Panc1 (cell line): ENCODE measurements at regions of chr14 and their contacts with region 1.

Region 1: DNA sequence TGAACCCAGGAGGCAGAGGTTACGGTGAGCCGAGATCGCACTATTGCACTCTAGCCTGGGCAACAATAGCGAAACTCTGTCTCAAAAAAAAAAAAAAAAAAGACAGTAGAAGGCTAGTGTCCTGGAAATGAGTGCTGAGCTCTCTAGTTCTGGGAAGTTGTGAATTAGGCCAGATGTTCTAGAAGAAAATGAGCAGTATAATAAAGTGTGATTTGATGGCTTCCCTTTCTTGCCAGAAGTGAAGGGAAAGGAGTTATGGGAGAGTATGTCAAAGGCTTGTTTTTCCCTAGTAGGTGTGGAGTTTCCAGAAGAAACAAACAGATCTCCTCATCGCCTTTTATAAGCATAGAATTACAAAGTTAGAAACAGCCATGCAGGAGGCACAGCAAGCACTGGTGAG is 20.5 kb downstream of the RNF212B start:
- DNase-seq: no peak
- ATAC-seq: no peak
- H3K4me3 ChIP-seq: no peak overlapping the region
- H3K27ac ChIP-seq: no peak overlapping the region
- H3K4me1 ChIP-seq: no peaks in the 10 kb centered on the region
- H3K27me3 ChIP-seq: peaks cover 7% of the 10 kb centered on the region; the same call in 1 of the 2 replicates
- CTCF ChIP-seq: no peak

Region 2: DNA sequence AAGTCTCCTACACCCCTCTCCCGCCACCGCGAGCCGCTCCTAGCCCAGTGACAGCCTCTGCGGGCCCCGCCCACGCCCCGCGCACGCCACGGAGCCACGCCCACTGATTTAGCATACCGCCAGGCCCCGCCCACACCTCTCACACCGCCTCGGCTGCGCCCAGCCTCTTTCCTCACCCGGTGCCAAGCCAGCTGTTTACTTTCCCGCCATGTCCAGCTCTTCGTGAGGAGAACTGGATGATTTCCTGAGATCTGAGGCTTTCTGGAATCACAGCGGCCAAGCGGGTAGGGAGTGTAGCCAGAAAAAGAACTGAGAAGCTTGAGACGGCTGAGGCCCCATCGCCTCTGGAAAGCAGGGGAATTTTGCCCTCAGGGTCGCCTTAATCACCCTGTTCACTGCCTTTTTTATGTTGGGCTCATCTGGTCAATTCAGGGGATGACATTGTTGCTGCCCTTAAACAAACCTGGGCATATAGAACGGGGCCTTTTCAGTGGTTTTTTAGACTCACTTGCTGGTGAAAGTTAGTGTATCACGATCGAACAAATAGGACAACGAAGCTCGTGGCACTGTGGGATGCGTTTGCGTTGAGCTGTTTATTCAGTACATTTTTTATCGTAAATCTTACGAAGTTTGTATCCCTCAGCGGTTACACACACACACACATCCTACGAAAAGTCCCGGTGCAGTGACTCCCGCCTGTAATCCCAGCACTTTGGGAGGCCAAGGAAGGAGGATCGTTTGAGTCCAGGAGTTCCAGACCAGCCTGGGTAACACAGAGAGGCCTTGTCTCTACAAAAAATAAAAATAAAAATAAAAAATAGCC is 20.3 kb before region 1 on chr14 and contains the start of gene RNF212B:
- CTCF ChIA-PET with region 1: interaction called, 15 read pairs
- POLR2A ChIA-PET with region 1: no interaction called
- in situ Hi-C with region 1: no loop called
- intact Hi-C with region 1: no loop called
- DNase-seq: no peak
- ATAC-seq: peak; percentile 100
- H3K4me3 ChIP-seq: peak within 1 kb of the TSS; percentile 27 to 34
- H3K27ac ChIP-seq: no peak within 1 kb of the TSS
- H3K4me1 ChIP-seq: no peaks in the 10 kb centered on the region
- H3K27me3 ChIP-seq: peaks cover 3% of the 10 kb centered on the region; the same call in 1 of the 2 replicates
- CTCF ChIP-seq: no peak
- total RNA-seq, gene RNF212B: not detected